Upper lobe of right lung (tissue), 1 donor: ENCODE measurements at regions of chr9 and their contacts with region 1.

Region 1: GRCh38 chr9:22452415-22453010 is 5.9 kb downstream of the DMRTA1 start:
- DNase-seq: peak; percentile 63
- ATAC-seq: peak; percentile 78
- H3K4me3 ChIP-seq: no peak overlapping the region
- H3K27ac ChIP-seq: no peak overlapping the region
- H3K4me1 ChIP-seq: no peaks in the 10 kb centered on the region
- H3K27me3 ChIP-seq: peaks cover 19% of the 10 kb centered on the region
- CTCF ChIP-seq: peak; percentile 91

Region 2: DNA sequence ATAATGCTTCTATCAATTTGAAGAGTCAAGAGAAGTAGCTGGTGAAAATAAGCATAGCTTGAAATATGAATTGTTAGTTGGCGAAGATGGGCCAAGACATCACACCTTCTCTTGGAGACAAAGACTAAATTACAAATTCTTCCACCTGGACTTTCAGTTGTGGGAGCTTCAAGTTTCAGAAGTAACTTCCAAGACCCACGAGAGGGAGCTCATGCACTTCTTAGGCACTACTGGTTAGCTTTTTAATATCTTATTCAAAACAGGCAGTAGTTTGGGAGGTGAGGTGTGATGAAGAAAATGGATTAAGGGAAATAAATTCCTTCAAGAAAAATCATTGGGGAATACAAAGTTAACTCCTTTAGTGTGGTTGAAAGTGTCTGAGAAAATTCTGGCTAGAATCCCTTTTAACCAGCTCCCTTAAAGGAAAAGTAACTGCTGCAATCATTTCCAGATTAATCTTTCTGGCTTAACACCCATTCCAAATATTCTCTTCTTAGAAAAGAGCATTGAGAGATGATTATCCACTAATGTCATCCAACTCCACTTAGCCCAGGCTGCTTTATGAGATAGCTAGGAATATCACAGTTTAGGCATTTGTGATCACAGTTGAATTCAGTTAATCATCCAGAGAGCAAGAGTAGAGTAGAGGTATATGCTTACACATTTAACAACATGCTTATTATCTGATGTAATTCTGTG is 145.4 kb before region 1 on chr9:
- intact Hi-C with region 1: loop called (anchors 10 kb)
- DNase-seq: no peak
- ATAC-seq: peak; percentile 65
- H3K4me3 ChIP-seq: no peak overlapping the region
- H3K27ac ChIP-seq: no peak overlapping the region
- H3K4me1 ChIP-seq: no peaks in the 10 kb centered on the region
- H3K27me3 ChIP-seq: no peaks in the 10 kb centered on the region
- CTCF ChIP-seq: peak; percentile 64